Naive thymus-derived CD4-positive, alpha-beta T cell (primary cell): ENCODE measurements at regions of chr1 and their contacts with region 1.

Region 1: GRCh38 chr1:37449936-37450335 is 24.4 kb upstream of the ZC3H12A start:
- DNase-seq: peak in 6 of 9 donors; percentile 20 to 48 (median 39)
- ATAC-seq: peak; percentile 82
- H3K4me3 ChIP-seq: no peak overlapping the region
- H3K4me3 Mint-ChIP-seq: peak overlapping the region in 6 of 10 donors; percentile 29 to 65 (median 48)
- H3K27ac ChIP-seq: no peak overlapping the region
- H3K27ac Mint-ChIP-seq: peak overlapping the region in 7 of 9 donors; percentile 10 to 77 (median 38)
- H3K4me1 ChIP-seq: peaks cover 0 to 8% of the 10 kb centered on the region in 2 donors
- H3K4me1 Mint-ChIP-seq: peaks cover 5 to 17% (median 13%) of the 10 kb centered on the region in 7 donors
- H3K27me3 ChIP-seq: no peaks in the 10 kb centered on the region
- H3K27me3 Mint-ChIP-seq: peaks cover 0 to 15% (median 8%) of the 10 kb centered on the region in 5 donors

Region 2: GRCh38 chr1:37553927-37554808 is 104.2 kb after region 1 on chr1 and contains the start of gene SNIP1:
- CTCF ChIA-PET with region 1: no interaction called
- POLR2A ChIA-PET with region 1: no interaction called
- intact Hi-C with region 1: loop called in 1 of 2 experiments (anchors 1 kb)
- DNase-seq: peak; percentile 67 to 94 (median 92)
- ATAC-seq: peak; percentile 99
- H3K4me3 ChIP-seq: peak within 1 kb of the TSS; percentile 92
- H3K4me3 Mint-ChIP-seq: peak within 1 kb of the TSS; percentile 97 to 100 (median 99)
- H3K27ac ChIP-seq: peak within 1 kb of the TSS; percentile 94
- H3K27ac Mint-ChIP-seq: peak within 1 kb of the TSS; percentile 91 to 99 (median 98)
- H3K4me1 ChIP-seq: peaks cover 10 to 24% of the 10 kb centered on the region in 2 donors
- H3K4me1 Mint-ChIP-seq: peaks cover 23 to 51% (median 45%) of the 10 kb centered on the region in 7 donors
- H3K27me3 ChIP-seq: no peaks in the 10 kb centered on the region
- H3K27me3 Mint-ChIP-seq: peaks cover 0 to 6% (median 0%) of the 10 kb centered on the region in 5 donors
- total RNA-seq, gene SNIP1: 27.8 to 53.6 (median 36.7) TPM

Region 3: GRCh38 chr1:39317910-39318633 is 1868.1 kb after region 1 on chr1:
- CTCF ChIA-PET with region 1: no interaction called
- POLR2A ChIA-PET with region 1: no interaction called
- intact Hi-C with region 1: no loop called
- DNase-seq: no peak
- ATAC-seq: no peak
- H3K4me3 ChIP-seq: no peak overlapping the region
- H3K4me3 Mint-ChIP-seq: no peak overlapping the region
- H3K27ac ChIP-seq: no peak overlapping the region
- H3K27ac Mint-ChIP-seq: peak overlapping the region in 3 of 9 donors; percentile 10 to 76 (median 32)
- H3K4me1 ChIP-seq: no peaks in the 10 kb centered on the region
- H3K4me1 Mint-ChIP-seq: peaks cover 0 to 10% (median 0%) of the 10 kb centered on the region in 7 donors
- H3K27me3 ChIP-seq: no peaks in the 10 kb centered on the region
- H3K27me3 Mint-ChIP-seq: no peaks in the 10 kb centered on the region